GM13976 (cell line): ENCODE measurements at regions of chr5 and their contacts with region 1.

Region 1: DNA sequence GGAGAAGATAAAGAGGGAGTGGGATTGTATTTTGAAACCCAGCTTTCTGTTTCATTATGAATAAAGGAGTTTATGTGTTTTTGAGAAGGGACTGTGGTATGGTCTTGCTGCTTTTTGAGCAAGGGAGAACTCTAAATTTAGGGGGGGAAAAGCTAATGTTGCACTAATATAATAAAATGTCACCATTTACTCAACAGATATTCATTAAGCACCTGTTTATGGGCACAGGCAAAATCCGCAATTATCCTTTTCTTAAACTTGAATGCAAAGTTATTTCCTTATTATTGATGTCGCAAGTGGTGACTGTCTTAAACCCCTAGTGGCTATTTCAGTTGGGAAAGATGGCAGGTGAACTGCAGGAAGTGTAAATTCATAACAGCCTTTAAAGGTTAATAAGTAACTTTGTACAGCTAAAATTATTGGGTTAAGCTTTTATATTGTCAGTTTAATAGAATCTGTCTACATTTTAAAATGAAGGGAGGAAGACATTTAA is 1.5 kb downstream of the CDC42SE2 start:
- DNase-seq: no peak
- CTCF ChIP-seq: peak; percentile 8

Region 2: GRCh38 chr5:131382407-131383395 is 117.3 kb after region 1 on chr5:
- in situ Hi-C with region 1: loop called (anchors 5 kb)
- DNase-seq: peak; percentile 38
- CTCF ChIP-seq: peak; percentile 49